ENCODE measurements at regions of chr10 and their contacts with region 1.

Region 1: GRCh38 chr10:29470355-29470705 is 164.4 kb downstream of the SVIL start:
- DNase-seq: peak in 1 of 2 donors; percentile 21
- H3K4me3 ChIP-seq: no peak overlapping the region
- H3K27ac ChIP-seq: no peak overlapping the region
- H3K4me1 ChIP-seq: peaks cover 0 to 8% of the 10 kb centered on the region in 2 donors
- H3K27me3 ChIP-seq: no peaks in the 10 kb centered on the region
- CTCF ChIP-seq: no peak
- POLR2A ChIP-seq: no peak

Region 2: GRCh38 chr10:29022473-29022872 is 447.9 kb before region 1 on chr10:
- intact Hi-C with region 1: no loop called
- DNase-seq: no peak
- H3K4me3 ChIP-seq: no peak overlapping the region
- H3K27ac ChIP-seq: no peak overlapping the region
- H3K4me1 ChIP-seq: no peaks in the 10 kb centered on the region
- H3K27me3 ChIP-seq: no peaks in the 10 kb centered on the region
- CTCF ChIP-seq: no peak
- POLR2A ChIP-seq: no peak

Region 3: DNA sequence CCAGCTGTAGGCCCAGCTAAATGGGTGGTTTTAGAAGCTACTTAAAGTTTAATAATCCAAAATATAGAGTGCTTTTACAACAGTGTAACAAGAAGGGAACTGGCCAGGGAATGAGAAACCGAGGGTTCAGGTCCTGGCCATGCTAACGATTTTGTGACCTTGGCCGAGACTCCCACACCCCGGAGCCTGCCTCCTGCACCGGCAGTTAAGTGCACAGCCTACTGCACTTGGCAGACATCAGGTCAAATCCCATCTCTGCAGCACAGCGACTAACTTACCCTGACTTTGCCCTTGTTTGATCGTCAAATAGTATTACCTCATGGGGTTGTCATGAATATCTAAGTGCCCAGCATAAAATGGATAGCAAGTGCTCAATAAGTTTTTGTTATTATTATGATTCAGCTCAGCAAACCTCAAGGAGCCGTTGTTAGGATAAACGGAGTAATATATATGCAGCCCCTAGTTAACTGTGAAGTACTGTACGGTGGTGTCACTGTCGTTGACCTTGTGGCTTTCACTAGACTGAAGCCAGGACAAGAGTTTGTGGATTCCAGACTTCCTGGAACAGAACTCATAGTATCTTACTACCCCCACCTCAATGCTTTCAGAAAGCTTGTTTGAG is 146.0 kb before region 1 on chr10:
- intact Hi-C with region 1: no loop called
- DNase-seq: no peak
- H3K4me3 ChIP-seq: no peak overlapping the region
- H3K27ac ChIP-seq: no peak overlapping the region
- H3K4me1 ChIP-seq: peaks cover 8 to 11% of the 10 kb centered on the region in 2 donors
- H3K27me3 ChIP-seq: no peaks in the 10 kb centered on the region
- CTCF ChIP-seq: no peak
- POLR2A ChIP-seq: no peak

Region 4: DNA sequence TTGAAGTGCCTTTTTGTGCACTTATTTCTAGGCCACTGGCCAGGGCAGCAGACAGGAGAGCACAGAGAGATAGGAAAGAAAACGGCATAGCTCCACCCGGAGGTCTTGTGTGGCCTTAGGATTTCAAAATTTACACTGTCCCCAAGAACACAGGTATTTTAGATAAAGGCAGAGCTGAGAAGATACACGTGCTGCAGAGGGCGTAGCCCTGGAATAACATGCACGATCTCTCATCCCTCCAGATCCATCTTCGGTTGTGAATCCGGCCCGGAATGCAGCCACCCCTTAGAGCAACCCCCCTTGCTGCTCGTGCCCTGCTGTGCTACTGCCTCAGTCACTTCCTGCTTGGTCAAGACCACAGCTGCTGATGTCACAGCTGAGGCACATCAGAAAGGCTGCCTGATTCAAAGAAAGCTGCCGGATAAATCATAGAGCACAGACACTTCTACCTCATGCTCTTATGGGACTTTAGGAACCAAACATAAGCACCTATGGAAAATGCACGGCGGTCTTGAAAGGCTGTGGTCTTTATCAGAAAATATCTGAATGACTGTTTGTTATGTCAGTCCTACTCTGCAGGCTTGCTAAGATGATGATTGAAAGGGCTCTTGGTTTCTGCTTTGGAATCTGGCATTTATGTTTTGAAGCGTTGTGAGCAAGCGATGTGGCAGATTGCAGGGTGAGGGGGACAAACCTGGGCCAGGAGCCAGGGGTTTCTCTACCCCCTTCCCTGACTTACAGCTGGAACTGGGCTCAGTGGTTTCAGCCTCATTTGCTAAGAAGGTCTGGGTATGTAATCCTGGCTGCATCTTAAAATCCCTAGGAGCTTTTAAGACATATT is 12.5 kb after region 1 on chr10:
- intact Hi-C with region 1: loop called (anchors 2 kb)
- DNase-seq: peak; percentile 55 to 63
- H3K4me3 ChIP-seq: no peak overlapping the region
- H3K27ac ChIP-seq: peak overlapping the region in 1 of 3 donors; percentile 51
- H3K4me1 ChIP-seq: peaks cover 12 to 16% of the 10 kb centered on the region in 2 donors
- H3K27me3 ChIP-seq: no peaks in the 10 kb centered on the region
- CTCF ChIP-seq: no peak
- POLR2A ChIP-seq: no peak

Measured in thyroid gland (tissue), 4 donors.